Activated CD4-positive, alpha-beta memory T cell treated with anti-CD3 and anti-CD28 coated beads for 36 hours (primary cell): ENCODE measurements at regions of chr11 and their contacts with region 1.

Region 1: GRCh38 chr11:108620958-108621772 is 27.6 kb upstream of the EXPH5 start:
- DNase-seq: no peak
- H3K4me3 Mint-ChIP-seq: no peak overlapping the region
- H3K27ac Mint-ChIP-seq: no peak overlapping the region
- H3K4me1 Mint-ChIP-seq: peaks cover 21% of the 10 kb centered on the region
- H3K27me3 Mint-ChIP-seq: peaks cover 20% of the 10 kb centered on the region

Region 2: GRCh38 chr11:108199446-108200321 is 421.5 kb before region 1 on chr11:
- CTCF ChIA-PET with region 1: no interaction called
- POLR2A ChIA-PET with region 1: no interaction called
- intact Hi-C with region 1: loop called (anchors 1 kb)
- DNase-seq: peak; percentile 91
- H3K4me3 Mint-ChIP-seq: no peak overlapping the region
- H3K27ac Mint-ChIP-seq: peak overlapping the region; percentile 76
- H3K4me1 Mint-ChIP-seq: peaks cover 89% of the 10 kb centered on the region
- H3K27me3 Mint-ChIP-seq: no peaks in the 10 kb centered on the region

Region 3: GRCh38 chr11:108302121-108302785 is 318.9 kb before region 1 on chr11:
- CTCF ChIA-PET with region 1: no interaction called
- POLR2A ChIA-PET with region 1: no interaction called
- intact Hi-C with region 1: loop called (anchors 5 kb)
- DNase-seq: no peak
- H3K4me3 Mint-ChIP-seq: no peak overlapping the region
- H3K27ac Mint-ChIP-seq: no peak overlapping the region
- H3K4me1 Mint-ChIP-seq: peaks cover 20% of the 10 kb centered on the region
- H3K27me3 Mint-ChIP-seq: no peaks in the 10 kb centered on the region

Region 4: GRCh38 chr11:108497317-108498045 is 123.7 kb before region 1 on chr11:
- CTCF ChIA-PET with region 1: no interaction called
- POLR2A ChIA-PET with region 1: no interaction called
- intact Hi-C with region 1: loop called (anchors 10 kb)
- DNase-seq: peak; percentile 87
- H3K4me3 Mint-ChIP-seq: peak overlapping the region; percentile 95
- H3K27ac Mint-ChIP-seq: peak overlapping the region; percentile 99
- H3K4me1 Mint-ChIP-seq: peaks cover 16% of the 10 kb centered on the region
- H3K27me3 Mint-ChIP-seq: no peaks in the 10 kb centered on the region

Region 5: DNA sequence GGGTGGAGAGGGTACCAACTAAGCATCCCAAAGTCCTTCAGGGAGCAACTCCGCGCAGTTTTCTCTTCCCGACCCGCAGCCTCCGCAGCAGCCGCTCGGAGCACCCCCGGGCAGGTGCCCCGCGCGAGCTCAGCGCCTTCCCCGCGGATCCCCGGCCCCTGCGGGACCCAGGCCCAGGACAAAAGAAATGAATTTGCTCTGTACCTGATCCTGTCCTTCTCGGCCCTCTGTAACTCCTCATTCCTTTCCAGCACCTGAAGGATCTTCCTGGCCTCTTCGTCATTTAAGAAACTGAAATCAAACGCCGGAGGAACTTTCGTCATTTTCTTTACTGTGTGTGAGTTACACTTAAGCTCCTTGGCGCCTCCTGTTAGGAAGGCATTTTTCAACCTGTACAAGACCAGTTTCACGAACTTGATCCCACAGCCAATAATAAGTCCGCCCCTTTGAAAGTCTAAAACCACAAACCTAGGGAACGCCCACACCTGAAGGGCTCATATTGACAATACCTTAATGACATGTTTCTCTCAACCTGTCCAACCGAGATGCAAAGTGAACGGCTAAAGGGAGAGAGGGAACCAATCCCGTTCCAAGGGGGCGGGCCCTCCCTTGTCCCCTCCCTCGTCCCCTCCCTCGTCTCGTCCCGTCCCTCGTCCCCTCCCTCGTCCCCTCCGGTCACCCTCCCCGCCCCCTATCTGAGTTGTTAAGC is 27.8 kb before region 1 on chr11 and contains the start of gene EXPH5:
- CTCF ChIA-PET with region 1: no interaction called
- POLR2A ChIA-PET with region 1: no interaction called
- intact Hi-C with region 1: loop called (anchors 1 kb)
- DNase-seq: peak; percentile 93
- H3K4me3 Mint-ChIP-seq: peak within 1 kb of the TSS; percentile 87
- H3K27ac Mint-ChIP-seq: peak within 1 kb of the TSS; percentile 68
- H3K4me1 Mint-ChIP-seq: peaks cover 17% of the 10 kb centered on the region
- H3K27me3 Mint-ChIP-seq: peaks cover 11% of the 10 kb centered on the region
- total RNA-seq, gene EXPH5: 1.4 to 1.8 TPM

Region 6: GRCh38 chr11:108727665-108728064 is 106.5 kb after region 1 on chr11:
- CTCF ChIA-PET with region 1: no interaction called
- POLR2A ChIA-PET with region 1: no interaction called
- intact Hi-C with region 1: loop called (anchors 2 kb)
- DNase-seq: no peak
- H3K4me3 Mint-ChIP-seq: no peak overlapping the region
- H3K27ac Mint-ChIP-seq: peak overlapping the region; percentile 58
- H3K4me1 Mint-ChIP-seq: peaks cover 47% of the 10 kb centered on the region
- H3K27me3 Mint-ChIP-seq: no peaks in the 10 kb centered on the region